ENCODE measurements at regions of chr15 and their contacts with region 1.

Region 1: DNA sequence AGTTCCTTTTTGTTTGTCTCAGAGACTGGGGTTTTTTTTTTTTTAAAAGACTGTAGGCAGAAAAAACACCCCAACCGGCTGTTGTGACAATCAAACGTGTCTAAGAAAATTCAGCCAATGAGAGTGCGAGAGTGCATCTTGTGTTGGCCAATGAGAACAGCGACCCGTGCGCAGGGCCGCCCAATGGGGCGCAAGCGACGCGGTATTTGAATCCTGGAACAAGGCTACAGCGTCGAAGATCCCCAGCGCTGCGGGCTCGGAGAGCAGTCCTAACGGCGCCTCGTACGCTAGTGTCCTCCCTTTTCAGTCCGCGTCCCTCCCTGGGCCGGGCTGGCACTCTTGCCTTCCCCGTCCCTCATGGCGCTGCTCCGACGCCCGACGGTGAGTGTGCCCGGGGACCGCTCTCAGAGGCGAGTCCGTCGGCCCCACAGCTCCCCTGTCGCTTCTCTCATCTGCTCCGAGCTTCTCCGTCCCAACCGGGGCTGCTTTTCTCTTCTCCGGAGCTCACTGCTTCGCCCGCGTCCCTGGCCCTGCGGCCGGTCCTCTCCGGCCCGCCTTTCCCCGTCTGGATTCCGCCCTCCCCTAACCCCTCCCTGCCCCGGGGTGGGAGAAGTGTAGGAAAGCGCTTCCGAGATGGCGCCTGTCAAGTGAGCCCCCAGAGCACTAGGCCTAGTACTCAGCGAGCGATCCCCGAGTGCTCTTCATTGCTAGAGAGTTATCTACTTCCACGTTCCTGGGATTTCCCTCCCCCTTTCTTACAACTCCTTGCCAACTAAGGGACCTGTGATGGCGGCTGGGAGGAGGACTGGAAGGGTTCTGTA is at the start of gene CCNB2:
- DNase-seq: peak; percentile 96 to 97 (median 96)
- ATAC-seq: peak; percentile 99
- H3K4me3 ChIP-seq: peak within 1 kb of the TSS; percentile 82
- H3K27ac ChIP-seq: peak within 1 kb of the TSS; percentile 95
- H3K4me1 ChIP-seq: peaks cover 0 to 7% of the 10 kb centered on the region in 2 experiments; a peak in 3 of 5 replicates
- H3K27me3 ChIP-seq: no peaks in the 10 kb centered on the region
- CTCF ChIP-seq: no peak
- EP300 ChIP-seq: no peak; the same call in 1 of the 2 replicates
- POLR2A ChIP-seq: peak; percentile 96
- RAD21 ChIP-seq: no peak
- polyA plus RNA-seq, gene CCNB2: 258 to 266 TPM

Region 2: GRCh38 chr15:58987489-58988005 is 117.6 kb before region 1 on chr15 and contains the start of gene RNF111:
- CTCF ChIA-PET with region 1: no interaction called
- POLR2A ChIA-PET with region 1: interaction called, 4 read pairs
- in situ Hi-C with region 1: no loop called
- intact Hi-C with region 1: loop called (anchors 5 kb)
- DNase-seq: peak; percentile 84 to 97 (median 88)
- ATAC-seq: peak; percentile 88
- H3K4me3 ChIP-seq: peak within 1 kb of the TSS; percentile 96
- H3K27ac ChIP-seq: peak within 1 kb of the TSS; percentile 97
- H3K4me1 ChIP-seq: peaks cover 3 to 7% of the 10 kb centered on the region in 2 experiments; a peak in 3 of 5 replicates
- H3K27me3 ChIP-seq: no peaks in the 10 kb centered on the region; a peak in 1 of 5 replicates
- CTCF ChIP-seq: no peak
- EP300 ChIP-seq: peak; percentile 12; the same call in 1 of the 2 replicates
- POLR2A ChIP-seq: peak; percentile 94
- RAD21 ChIP-seq: no peak
- polyA plus RNA-seq, gene RNF111: 7.9 to 8.5 TPM

Region 3: DNA sequence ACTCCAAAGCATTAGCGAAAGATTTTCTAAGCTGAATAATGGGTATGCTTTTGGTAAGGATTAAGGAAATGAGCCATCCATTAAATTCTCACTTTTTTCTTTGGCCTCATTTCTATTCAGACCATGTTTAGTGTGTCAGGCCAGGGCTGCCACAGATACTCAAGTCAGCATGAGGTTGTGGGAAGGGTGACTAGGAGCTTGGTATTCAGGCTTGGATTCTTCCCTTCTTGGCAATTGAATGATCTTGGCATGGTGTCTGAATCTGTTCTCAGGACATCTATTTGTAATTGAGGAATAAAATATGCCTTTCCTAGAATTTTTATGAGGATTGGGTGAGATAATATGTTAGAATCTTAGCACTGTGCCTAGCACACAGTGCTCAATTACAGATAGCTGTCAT is 11.0 kb after region 1 on chr15:
- CTCF ChIA-PET with region 1: no interaction called
- POLR2A ChIA-PET with region 1: interaction called, 27 read pairs
- in situ Hi-C with region 1: no loop called
- intact Hi-C with region 1: no loop called
- DNase-seq: no peak
- ATAC-seq: no peak
- H3K4me3 ChIP-seq: no peak overlapping the region
- H3K27ac ChIP-seq: no peak overlapping the region
- H3K4me1 ChIP-seq: peaks cover 0 to 4% of the 10 kb centered on the region in 2 experiments; a peak in 3 of 5 replicates
- H3K27me3 ChIP-seq: no peaks in the 10 kb centered on the region
- CTCF ChIP-seq: no peak
- EP300 ChIP-seq: no peak
- POLR2A ChIP-seq: no peak
- RAD21 ChIP-seq: no peak

Region 4: GRCh38 chr15:59160880-59161593 is 55.9 kb after region 1 on chr15:
- CTCF ChIA-PET with region 1: no interaction called
- POLR2A ChIA-PET with region 1: no interaction called
- in situ Hi-C with region 1: no loop called
- intact Hi-C with region 1: no loop called
- DNase-seq: peak; percentile 46 to 63 (median 56)
- ATAC-seq: peak; percentile 97
- H3K4me3 ChIP-seq: no peak overlapping the region
- H3K27ac ChIP-seq: no peak overlapping the region
- H3K4me1 ChIP-seq: peaks cover 0 to 4% of the 10 kb centered on the region in 2 experiments; a peak in 1 of 5 replicates
- H3K27me3 ChIP-seq: peaks cover 10 to 46% of the 10 kb centered on the region in 2 experiments; a peak in 4 of 5 replicates
- CTCF ChIP-seq: peak; percentile 82 to 90 (median 89)
- EP300 ChIP-seq: no peak
- POLR2A ChIP-seq: no peak
- RAD21 ChIP-seq: peak; percentile 68 to 88

Measured in K562 (cell line).